ENCODE measurements at regions of chr2 and their contacts with region 1.

Region 1: GRCh38 chr2:225668606-225669266 is 269.2 kb downstream of the NYAP2 start:
- DNase-seq: no peak
- H3K4me3 ChIP-seq: no peak overlapping the region
- H3K27ac ChIP-seq: no peak overlapping the region
- H3K4me1 ChIP-seq: peaks cover 0 to 21% (median 10%) of the 10 kb centered on the region in 4 donors
- H3K27me3 ChIP-seq: no peaks in the 10 kb centered on the region
- CTCF ChIP-seq: peak; percentile 35 to 70 (median 62)
- EP300 ChIP-seq: no peak
- POLR2A ChIP-seq: no peak

Region 2: DNA sequence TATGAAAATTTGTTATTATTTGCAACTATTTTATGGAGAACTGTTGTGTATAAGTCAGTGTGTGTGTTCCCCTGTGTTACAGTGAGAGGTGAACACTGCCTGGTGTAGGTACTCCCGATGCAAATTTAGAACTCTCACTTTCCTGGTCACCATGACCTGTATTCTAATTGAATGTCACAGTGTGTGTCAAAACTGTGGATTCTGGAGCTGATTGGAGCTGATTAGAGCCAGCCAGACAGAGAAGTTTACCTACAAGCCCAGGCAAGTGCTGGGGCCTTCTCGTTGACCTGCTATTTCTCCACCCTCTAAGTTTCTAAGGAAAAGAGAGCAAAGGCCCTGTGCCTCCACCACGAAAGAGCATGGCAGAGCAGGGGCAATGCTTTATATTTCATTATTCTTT is 53.2 kb before region 1 on chr2:
- intact Hi-C with region 1: no loop called
- DNase-seq: no peak
- H3K4me3 ChIP-seq: no peak overlapping the region
- H3K27ac ChIP-seq: no peak overlapping the region
- H3K4me1 ChIP-seq: no peaks in the 10 kb centered on the region
- H3K27me3 ChIP-seq: no peaks in the 10 kb centered on the region
- CTCF ChIP-seq: no peak
- EP300 ChIP-seq: no peak
- POLR2A ChIP-seq: no peak

Region 3: GRCh38 chr2:225889446-225889850 is 220.7 kb after region 1 on chr2:
- intact Hi-C with region 1: loop called (anchors 2 kb)
- DNase-seq: no peak
- H3K4me3 ChIP-seq: no peak overlapping the region
- H3K27ac ChIP-seq: no peak overlapping the region
- H3K4me1 ChIP-seq: peaks cover 0 to 11% (median under 1%) of the 10 kb centered on the region in 4 donors
- H3K27me3 ChIP-seq: no peaks in the 10 kb centered on the region
- CTCF ChIP-seq: peak; percentile 34 to 86 (median 74)
- EP300 ChIP-seq: no peak
- POLR2A ChIP-seq: no peak

Region 4: GRCh38 chr2:226984750-226985582 is 1316.2 kb after region 1 on chr2:
- intact Hi-C with region 1: loop called (anchors 2 kb)
- DNase-seq: no peak
- H3K4me3 ChIP-seq: no peak overlapping the region
- H3K27ac ChIP-seq: peak overlapping the region in 1 of 4 donors; percentile 52
- H3K4me1 ChIP-seq: peaks cover 0 to 11% (median 4%) of the 10 kb centered on the region in 4 donors
- H3K27me3 ChIP-seq: no peaks in the 10 kb centered on the region
- CTCF ChIP-seq: peak; percentile 46 to 78 (median 65)
- EP300 ChIP-seq: no peak
- POLR2A ChIP-seq: no peak

Region 5: DNA sequence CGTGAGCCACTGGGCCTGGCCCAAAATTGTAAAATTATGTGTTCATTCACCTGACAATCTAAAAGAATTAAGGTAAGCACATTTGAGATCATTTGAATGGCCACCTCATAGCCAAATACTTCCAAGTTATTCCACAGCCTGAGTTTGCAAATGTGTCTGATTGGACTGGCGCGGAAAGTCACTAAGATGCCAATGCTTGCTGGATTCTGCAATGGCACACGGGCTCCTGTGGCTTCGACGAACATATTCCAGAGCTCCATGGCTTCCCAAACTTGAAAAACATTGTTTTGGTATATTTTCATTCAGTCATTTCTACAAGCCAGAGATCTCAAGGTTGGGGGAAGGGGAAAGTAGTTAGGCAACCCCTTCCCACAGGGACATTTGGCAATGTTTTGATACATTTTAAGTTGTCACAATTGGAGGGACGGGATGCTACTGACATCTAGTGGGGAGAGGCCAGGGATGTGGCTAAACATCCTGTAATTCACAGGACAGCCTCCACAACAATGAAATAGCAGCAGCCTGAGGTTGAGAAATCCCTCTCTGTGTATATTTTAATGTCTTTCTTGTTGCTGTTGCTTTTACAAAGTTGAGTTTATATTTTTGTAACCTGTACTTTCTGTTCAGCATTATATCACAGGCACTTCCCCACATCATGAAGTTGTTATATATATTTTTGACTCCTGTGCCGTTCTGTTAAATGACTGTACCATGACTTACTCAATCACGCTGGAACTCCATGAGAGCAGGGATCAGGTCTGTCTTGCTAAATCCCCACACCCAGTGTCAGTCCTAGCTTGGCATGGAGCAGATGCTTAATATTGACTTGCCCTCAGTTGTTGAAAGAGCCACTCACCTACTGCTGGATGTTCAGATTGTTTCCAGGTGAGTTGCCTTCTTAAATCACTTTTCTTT is 1438.4 kb after region 1 on chr2:
- intact Hi-C with region 1: loop called (anchors 5 kb)
- DNase-seq: no peak
- H3K4me3 ChIP-seq: no peak overlapping the region
- H3K27ac ChIP-seq: peak overlapping the region in 1 of 4 donors; percentile 6
- H3K4me1 ChIP-seq: peaks cover 0 to 5% (median 1%) of the 10 kb centered on the region in 4 donors
- H3K27me3 ChIP-seq: no peaks in the 10 kb centered on the region
- CTCF ChIP-seq: peak; percentile 55 to 72 (median 67)
- EP300 ChIP-seq: no peak
- POLR2A ChIP-seq: no peak

Region 6: DNA sequence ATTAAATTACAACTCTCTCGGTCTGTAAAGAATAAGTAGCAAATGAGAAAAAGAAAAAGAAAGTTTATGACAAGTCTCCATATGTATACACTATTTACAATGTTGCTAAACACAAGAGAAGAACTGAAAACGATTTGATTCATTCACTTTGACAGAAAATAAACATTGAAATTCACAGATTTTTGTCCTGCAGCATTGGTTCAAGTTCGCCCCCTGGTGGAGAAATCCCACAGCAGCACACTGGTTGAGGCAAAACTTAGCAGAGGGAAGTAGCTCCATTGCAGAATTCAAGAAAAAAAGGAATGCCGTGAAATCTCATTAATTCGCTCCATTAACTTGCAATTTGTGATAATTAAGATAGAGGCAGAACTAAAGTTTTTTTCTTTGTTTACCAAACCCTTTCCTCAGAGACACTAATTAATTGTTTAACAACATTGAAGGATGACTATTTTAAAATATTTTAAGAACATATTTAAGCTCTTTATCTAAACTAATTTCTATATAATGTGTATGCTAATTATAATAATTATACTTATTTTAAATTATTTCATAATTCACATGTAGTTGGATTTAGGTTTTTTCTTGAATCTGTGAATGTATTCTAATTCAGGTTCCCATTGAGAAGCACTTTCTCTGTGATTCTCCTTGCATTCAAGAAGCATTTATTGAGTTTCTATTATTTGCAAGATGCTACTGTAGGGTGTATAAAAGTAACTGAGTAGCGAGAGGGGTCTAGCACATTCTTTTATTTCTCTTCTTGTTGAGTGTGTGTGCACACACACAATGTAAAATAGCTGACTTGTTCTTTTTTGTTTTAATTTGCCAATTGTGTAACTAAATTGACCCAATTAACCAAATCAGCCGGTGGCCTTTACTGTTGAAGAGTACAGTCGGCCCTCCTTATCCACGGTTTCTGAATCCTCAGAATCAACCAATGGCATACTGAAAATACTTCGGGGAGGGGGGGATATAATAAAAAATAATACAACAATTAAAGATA is 1569.8 kb after region 1 on chr2:
- intact Hi-C with region 1: loop called (anchors 5 kb)
- DNase-seq: peak; percentile 75
- H3K4me3 ChIP-seq: no peak overlapping the region
- H3K27ac ChIP-seq: no peak overlapping the region
- H3K4me1 ChIP-seq: peaks cover 0 to 7% (median 0%) of the 10 kb centered on the region in 4 donors
- H3K27me3 ChIP-seq: no peaks in the 10 kb centered on the region
- CTCF ChIP-seq: peak; percentile 38 to 87 (median 81)
- EP300 ChIP-seq: no peak
- POLR2A ChIP-seq: no peak